WTC11 (cell line): ENCODE measurements at regions of chr1 and their contacts with region 1.

Region 1: GRCh38 chr1:154878371-154879022 is 8.4 kb upstream of the KCNN3 start:
- DNase-seq: peak; percentile 94
- ATAC-seq: peak; percentile 95
- H3K4me3 Mint-ChIP-seq: no peak overlapping the region
- H3K27ac Mint-ChIP-seq: no peak overlapping the region
- H3K4me1 Mint-ChIP-seq: no peaks in the 10 kb centered on the region
- H3K27me3 Mint-ChIP-seq: no peaks in the 10 kb centered on the region
- CTCF ChIP-seq: peak; percentile 78

Region 2: GRCh38 chr1:154193821-154194220 is 684.7 kb before region 1 on chr1:
- CTCF ChIA-PET with region 1: no interaction called
- POLR2A ChIA-PET with region 1: no interaction called
- DNase-seq: no peak
- ATAC-seq: no peak
- H3K4me3 Mint-ChIP-seq: no peak overlapping the region
- H3K27ac Mint-ChIP-seq: no peak overlapping the region
- H3K4me1 Mint-ChIP-seq: peaks cover 10% of the 10 kb centered on the region
- H3K27me3 Mint-ChIP-seq: peaks cover 9% of the 10 kb centered on the region; the same call in 1 of the 2 replicates
- CTCF ChIP-seq: no peak

Region 3: DNA sequence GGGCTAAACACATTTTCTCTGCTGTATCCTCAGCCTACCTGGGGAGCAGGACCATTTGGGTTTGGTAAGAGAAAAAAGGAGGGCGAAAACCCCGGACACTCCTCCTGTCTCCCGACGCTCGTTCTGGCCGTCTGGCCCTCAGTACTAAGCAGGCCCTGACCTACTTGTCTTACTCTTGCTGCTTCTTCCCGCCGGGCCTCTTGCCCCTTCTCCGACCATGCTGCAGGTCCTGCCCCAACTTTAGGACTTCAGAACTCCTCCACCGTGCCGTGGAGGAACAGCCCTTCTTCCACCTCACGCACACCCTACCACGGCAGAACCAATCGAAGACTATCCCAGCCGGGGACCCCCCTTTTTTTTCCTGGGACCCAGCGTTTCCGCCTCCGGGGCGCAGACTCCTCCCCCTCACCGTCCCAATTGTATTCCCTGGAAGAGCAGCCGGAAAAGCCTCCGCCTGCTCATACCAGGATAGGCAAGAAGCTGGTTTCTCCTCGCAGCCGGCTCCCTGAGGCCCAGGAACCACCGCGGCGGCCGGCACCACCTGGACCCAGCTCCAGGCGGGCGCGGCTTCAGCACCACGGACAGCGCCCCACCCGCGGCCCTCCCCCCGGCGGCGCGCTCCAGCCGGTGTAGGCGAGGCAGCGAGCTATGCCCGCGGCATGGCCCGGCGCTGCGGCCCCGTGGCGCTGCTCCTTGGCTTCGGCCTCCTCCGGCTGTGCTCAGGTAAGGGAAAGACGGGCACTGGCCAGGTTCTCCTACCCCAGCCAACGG is 310.9 kb before region 1 on chr1 and contains the start of gene CHRNB2:
- CTCF ChIA-PET with region 1: interaction called, 11 read pairs
- POLR2A ChIA-PET with region 1: no interaction called
- DNase-seq: peak; percentile 92
- ATAC-seq: peak; percentile 93
- H3K4me3 Mint-ChIP-seq: peak within 1 kb of the TSS; percentile 97
- H3K27ac Mint-ChIP-seq: peak within 1 kb of the TSS; percentile 99
- H3K4me1 Mint-ChIP-seq: peaks cover 24% of the 10 kb centered on the region
- H3K27me3 Mint-ChIP-seq: peaks cover 22% of the 10 kb centered on the region
- CTCF ChIP-seq: no peak
- total RNA-seq, gene CHRNB2: 1.6 to 1.7 TPM (median 1.7 TPM) in 3 replicates

Region 4: DNA sequence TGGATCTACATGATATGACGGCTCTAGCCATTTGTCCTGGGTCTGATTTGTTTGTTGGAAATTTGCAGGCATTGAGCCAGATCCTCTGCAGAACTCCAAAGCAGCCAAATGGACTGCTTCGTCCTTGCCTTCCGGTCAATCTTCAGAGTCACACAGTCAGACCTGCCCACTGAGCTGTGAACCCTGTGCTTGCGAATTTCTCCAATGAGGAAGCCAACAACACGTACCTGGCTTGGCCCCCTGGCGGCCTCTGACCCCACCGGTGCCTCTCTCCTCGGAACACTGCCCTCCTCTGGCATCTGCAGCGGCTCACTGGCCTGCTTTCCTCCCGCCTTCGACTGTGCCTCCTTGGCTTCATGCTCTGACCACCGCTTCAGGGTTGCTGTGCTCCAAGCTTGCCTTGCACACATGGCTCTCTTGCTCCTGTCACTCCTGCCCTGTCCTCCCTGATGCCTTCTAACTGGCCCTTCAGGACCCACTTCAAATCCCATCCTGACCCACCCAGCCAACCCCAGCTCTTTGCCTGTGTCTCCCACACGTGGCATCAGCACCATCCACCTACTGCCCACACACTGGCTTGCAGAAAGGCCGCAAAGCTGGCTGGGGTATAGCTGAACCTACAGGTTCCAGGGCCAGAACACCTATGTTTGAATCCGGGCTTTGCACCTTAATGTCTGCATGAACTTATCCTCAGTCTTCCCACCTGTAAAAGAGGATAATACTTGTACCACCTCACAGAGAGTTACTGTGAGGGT is 136.6 kb before region 1 on chr1:
- CTCF ChIA-PET with region 1: interaction called, 16 read pairs
- POLR2A ChIA-PET with region 1: no interaction called
- DNase-seq: peak; percentile 83
- ATAC-seq: peak; percentile 98
- H3K4me3 Mint-ChIP-seq: no peak overlapping the region
- H3K27ac Mint-ChIP-seq: no peak overlapping the region
- H3K4me1 Mint-ChIP-seq: peaks cover 39% of the 10 kb centered on the region
- H3K27me3 Mint-ChIP-seq: no peaks in the 10 kb centered on the region
- CTCF ChIP-seq: peak; percentile 39

Region 5: GRCh38 chr1:154765970-154766369 is 112.5 kb before region 1 on chr1:
- CTCF ChIA-PET with region 1: interaction called, 23 read pairs
- POLR2A ChIA-PET with region 1: no interaction called
- DNase-seq: peak; percentile 59
- ATAC-seq: peak; percentile 97
- H3K4me3 Mint-ChIP-seq: no peak overlapping the region
- H3K27ac Mint-ChIP-seq: no peak overlapping the region
- H3K4me1 Mint-ChIP-seq: no peaks in the 10 kb centered on the region
- H3K27me3 Mint-ChIP-seq: peaks cover 4% of the 10 kb centered on the region
- CTCF ChIP-seq: no peak

Region 6: GRCh38 chr1:154809436-154810413 is 68.8 kb before region 1 on chr1:
- CTCF ChIA-PET with region 1: interaction called, 12 read pairs
- POLR2A ChIA-PET with region 1: no interaction called
- DNase-seq: no peak
- ATAC-seq: no peak
- H3K4me3 Mint-ChIP-seq: no peak overlapping the region
- H3K27ac Mint-ChIP-seq: peak overlapping the region; percentile 31
- H3K4me1 Mint-ChIP-seq: peaks cover 43% of the 10 kb centered on the region
- H3K27me3 Mint-ChIP-seq: no peaks in the 10 kb centered on the region; the same call in 1 of the 2 replicates
- CTCF ChIP-seq: no peak

Region 7: GRCh38 chr1:154863315-154864174 is 15.0 kb before region 1 on chr1:
- CTCF ChIA-PET with region 1: interaction called, 95 read pairs
- POLR2A ChIA-PET with region 1: interaction called, 3 read pairs
- DNase-seq: peak; percentile 73
- ATAC-seq: peak; percentile 81
- H3K4me3 Mint-ChIP-seq: no peak overlapping the region
- H3K27ac Mint-ChIP-seq: no peak overlapping the region
- H3K4me1 Mint-ChIP-seq: peaks cover 55% of the 10 kb centered on the region
- H3K27me3 Mint-ChIP-seq: peaks cover 14% of the 10 kb centered on the region
- CTCF ChIP-seq: peak; percentile 81

Region 8: GRCh38 chr1:154943649-154944400 is 65.3 kb after region 1 on chr1:
- CTCF ChIA-PET with region 1: interaction called, 14 read pairs
- POLR2A ChIA-PET with region 1: no interaction called
- DNase-seq: peak; percentile 68
- ATAC-seq: peak; percentile 81
- H3K4me3 Mint-ChIP-seq: no peak overlapping the region
- H3K27ac Mint-ChIP-seq: peak overlapping the region; percentile 82
- H3K4me1 Mint-ChIP-seq: peaks cover 24% of the 10 kb centered on the region
- H3K27me3 Mint-ChIP-seq: no peaks in the 10 kb centered on the region
- CTCF ChIP-seq: peak; percentile 45

Region 9: DNA sequence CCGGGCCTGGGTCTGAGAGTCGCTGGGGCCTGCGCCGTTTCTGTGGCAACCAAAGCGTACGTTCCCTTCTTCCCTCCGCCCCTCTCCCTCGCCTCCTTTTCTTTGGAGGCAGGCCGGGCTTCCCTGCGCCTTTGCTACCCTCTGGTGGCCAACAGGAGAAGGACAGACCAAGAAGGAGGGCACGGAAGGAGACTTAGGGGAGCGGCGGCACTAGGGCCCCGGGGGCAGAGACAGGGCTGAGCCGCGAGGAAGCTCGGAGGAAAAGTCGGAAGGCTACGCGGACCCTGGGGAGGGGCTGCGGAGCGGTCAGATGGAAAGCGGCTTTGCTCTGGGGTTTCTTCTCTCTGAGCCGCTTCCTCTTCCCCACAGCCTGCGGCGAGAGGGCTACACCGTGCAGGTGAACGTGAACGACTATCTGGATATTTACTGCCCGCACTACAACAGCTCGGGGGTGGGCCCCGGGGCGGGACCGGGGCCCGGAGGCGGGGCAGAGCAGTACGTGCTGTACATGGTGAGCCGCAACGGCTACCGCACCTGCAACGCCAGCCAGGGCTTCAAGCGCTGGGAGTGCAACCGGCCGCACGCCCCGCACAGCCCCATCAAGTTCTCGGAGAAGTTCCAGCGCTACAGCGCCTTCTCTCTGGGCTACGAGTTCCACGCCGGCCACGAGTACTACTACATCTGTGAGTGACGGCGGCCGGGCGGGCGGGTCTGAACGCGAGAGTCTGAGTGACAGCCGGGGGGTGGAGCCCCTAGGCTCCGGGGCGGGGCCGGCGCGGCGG is 206.4 kb after region 1 on chr1:
- CTCF ChIA-PET with region 1: no interaction called
- POLR2A ChIA-PET with region 1: no interaction called
- DNase-seq: peak; percentile 97
- ATAC-seq: peak; percentile 67
- H3K4me3 Mint-ChIP-seq: peak overlapping the region; percentile 95
- H3K27ac Mint-ChIP-seq: peak overlapping the region; percentile 74
- H3K4me1 Mint-ChIP-seq: peaks cover 35% of the 10 kb centered on the region
- H3K27me3 Mint-ChIP-seq: peaks cover 45% of the 10 kb centered on the region
- CTCF ChIP-seq: peak; percentile 90